Caco-2 (cell line): ENCODE measurements at regions of chr2 and their contacts with region 1.

Region 1: DNA sequence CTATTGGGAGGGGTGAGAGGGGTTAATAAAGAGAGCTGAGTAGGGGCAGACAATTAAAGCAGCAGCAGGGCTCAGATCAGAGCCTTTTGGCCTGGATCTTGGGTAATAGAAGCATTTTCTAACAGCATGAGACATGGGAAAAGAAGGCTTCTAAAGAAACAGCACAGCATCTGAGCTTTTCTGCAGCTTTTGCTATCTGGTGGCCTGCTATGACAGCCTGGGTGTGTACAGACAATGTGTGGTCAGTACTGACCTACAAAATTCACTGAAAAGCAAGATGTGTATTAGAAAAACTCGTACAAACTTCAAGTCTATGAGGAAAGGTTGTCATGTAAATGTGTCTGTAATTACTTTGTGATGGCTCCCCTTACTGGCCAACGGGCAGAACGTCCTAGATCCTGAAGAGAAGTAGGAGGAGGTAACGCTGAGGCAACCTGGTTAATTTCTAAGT is 95.6 kb downstream of the GALNT3 start:
- DNase-seq: peak; percentile 48 to 49
- H3K4me3 ChIP-seq: no peak overlapping the region
- H3K4me3 Mint-ChIP-seq: no peak overlapping the region
- H3K27ac Mint-ChIP-seq: no peak overlapping the region
- H3K4me1 ChIP-seq: no peaks in the 10 kb centered on the region
- H3K4me1 Mint-ChIP-seq: no peaks in the 10 kb centered on the region
- H3K27me3 ChIP-seq: no peaks in the 10 kb centered on the region
- H3K27me3 Mint-ChIP-seq: peaks cover 5% of the 10 kb centered on the region
- CTCF ChIP-seq: peak; percentile 37 to 73

Region 2: GRCh38 chr2:165529130-165529529 is 169.3 kb before region 1 on chr2:
- CTCF ChIA-PET with region 1: no interaction called
- POLR2A ChIA-PET with region 1: no interaction called
- intact Hi-C with region 1: no loop called
- DNase-seq: no peak
- H3K4me3 ChIP-seq: no peak overlapping the region
- H3K4me3 Mint-ChIP-seq: no peak overlapping the region
- H3K27ac Mint-ChIP-seq: no peak overlapping the region
- H3K4me1 ChIP-seq: no peaks in the 10 kb centered on the region
- H3K4me1 Mint-ChIP-seq: no peaks in the 10 kb centered on the region
- H3K27me3 ChIP-seq: no peaks in the 10 kb centered on the region
- H3K27me3 Mint-ChIP-seq: peaks cover 4% of the 10 kb centered on the region
- CTCF ChIP-seq: no peak

Region 3: GRCh38 chr2:165563468-165564225 is 134.8 kb before region 1 on chr2:
- CTCF ChIA-PET with region 1: no interaction called
- POLR2A ChIA-PET with region 1: no interaction called
- intact Hi-C with region 1: loop called (anchors 1 kb)
- DNase-seq: peak in 1 of 2 experiments; percentile 28
- H3K4me3 ChIP-seq: no peak overlapping the region
- H3K4me3 Mint-ChIP-seq: no peak overlapping the region
- H3K27ac Mint-ChIP-seq: no peak overlapping the region
- H3K4me1 ChIP-seq: no peaks in the 10 kb centered on the region
- H3K4me1 Mint-ChIP-seq: peaks cover 6% of the 10 kb centered on the region
- H3K27me3 ChIP-seq: no peaks in the 10 kb centered on the region
- H3K27me3 Mint-ChIP-seq: peaks cover 5% of the 10 kb centered on the region
- CTCF ChIP-seq: peak in 1 of 2 experiments; percentile 71

Region 4: GRCh38 chr2:165573534-165574461 is 124.7 kb before region 1 on chr2:
- CTCF ChIA-PET with region 1: no interaction called
- POLR2A ChIA-PET with region 1: no interaction called
- intact Hi-C with region 1: loop called (anchors 5 kb)
- DNase-seq: peak; percentile 82 to 83
- H3K4me3 ChIP-seq: peak overlapping the region; percentile 36
- H3K4me3 Mint-ChIP-seq: peak overlapping the region; percentile 79
- H3K27ac Mint-ChIP-seq: peak overlapping the region; percentile 27
- H3K4me1 ChIP-seq: peaks cover 4% of the 10 kb centered on the region; the same call in 1 of the 2 replicates
- H3K4me1 Mint-ChIP-seq: peaks cover 5% of the 10 kb centered on the region
- H3K27me3 ChIP-seq: no peaks in the 10 kb centered on the region
- H3K27me3 Mint-ChIP-seq: no peaks in the 10 kb centered on the region
- CTCF ChIP-seq: no peak

Region 5: DNA sequence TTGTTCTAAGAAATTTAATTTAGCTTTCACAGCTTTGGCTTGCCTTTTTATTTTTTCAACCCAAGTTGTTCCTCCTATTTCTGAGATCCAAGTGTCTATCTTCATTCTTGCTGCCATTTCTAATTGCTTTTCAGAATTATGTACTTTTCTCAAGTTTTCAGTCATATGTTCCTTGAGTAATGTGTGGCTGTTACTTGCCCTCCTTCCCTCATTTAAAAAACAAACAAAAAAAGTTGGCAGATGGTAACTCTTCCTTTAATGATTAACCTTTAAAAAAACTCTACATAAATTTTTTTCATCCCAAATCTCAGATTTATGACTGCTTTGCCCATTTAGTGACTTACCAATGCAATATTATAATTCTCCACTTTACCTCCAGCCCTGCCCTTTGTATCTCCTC is 35.7 kb before region 1 on chr2:
- CTCF ChIA-PET with region 1: no interaction called
- POLR2A ChIA-PET with region 1: no interaction called
- intact Hi-C with region 1: loop called (anchors 2 kb)
- DNase-seq: peak in 1 of 2 experiments; percentile 16
- H3K4me3 ChIP-seq: no peak overlapping the region
- H3K4me3 Mint-ChIP-seq: no peak overlapping the region
- H3K27ac Mint-ChIP-seq: peak overlapping the region; percentile 65
- H3K4me1 ChIP-seq: peaks cover 18% of the 10 kb centered on the region
- H3K4me1 Mint-ChIP-seq: peaks cover 11% of the 10 kb centered on the region
- H3K27me3 ChIP-seq: no peaks in the 10 kb centered on the region
- H3K27me3 Mint-ChIP-seq: peaks cover 6% of the 10 kb centered on the region
- CTCF ChIP-seq: no peak

Region 6: DNA sequence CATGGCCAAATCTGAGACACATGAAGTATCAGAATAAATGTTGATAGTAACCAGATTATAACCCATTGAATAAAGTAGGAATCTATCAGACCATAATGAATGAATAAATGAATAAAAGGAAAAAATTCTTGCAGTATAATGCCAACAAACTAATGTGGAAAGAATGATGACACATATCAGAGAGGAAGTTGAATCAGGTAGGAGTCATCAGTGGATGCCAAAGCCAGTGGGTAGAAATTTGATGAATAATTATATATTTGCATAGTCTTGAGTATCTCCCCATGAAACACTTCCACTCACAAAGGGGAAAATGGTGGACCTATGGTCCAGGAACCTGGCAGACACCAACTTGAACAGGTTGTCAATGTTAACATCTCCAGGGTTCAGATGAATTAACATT is 27.0 kb after region 1 on chr2:
- CTCF ChIA-PET with region 1: no interaction called
- POLR2A ChIA-PET with region 1: no interaction called
- intact Hi-C with region 1: no loop called
- DNase-seq: no peak
- H3K4me3 ChIP-seq: no peak overlapping the region
- H3K4me3 Mint-ChIP-seq: no peak overlapping the region
- H3K27ac Mint-ChIP-seq: no peak overlapping the region
- H3K4me1 ChIP-seq: no peaks in the 10 kb centered on the region
- H3K4me1 Mint-ChIP-seq: no peaks in the 10 kb centered on the region
- H3K27me3 ChIP-seq: no peaks in the 10 kb centered on the region
- H3K27me3 Mint-ChIP-seq: peaks cover 16% of the 10 kb centered on the region
- CTCF ChIP-seq: no peak

Region 7: GRCh38 chr2:165766324-165766927 is 68.0 kb after region 1 on chr2:
- CTCF ChIA-PET with region 1: no interaction called
- POLR2A ChIA-PET with region 1: no interaction called
- intact Hi-C with region 1: no loop called
- DNase-seq: no peak
- H3K4me3 ChIP-seq: no peak overlapping the region
- H3K4me3 Mint-ChIP-seq: no peak overlapping the region
- H3K27ac Mint-ChIP-seq: no peak overlapping the region
- H3K4me1 ChIP-seq: no peaks in the 10 kb centered on the region
- H3K4me1 Mint-ChIP-seq: no peaks in the 10 kb centered on the region
- H3K27me3 ChIP-seq: no peaks in the 10 kb centered on the region
- H3K27me3 Mint-ChIP-seq: no peaks in the 10 kb centered on the region
- CTCF ChIP-seq: no peak

Region 8: DNA sequence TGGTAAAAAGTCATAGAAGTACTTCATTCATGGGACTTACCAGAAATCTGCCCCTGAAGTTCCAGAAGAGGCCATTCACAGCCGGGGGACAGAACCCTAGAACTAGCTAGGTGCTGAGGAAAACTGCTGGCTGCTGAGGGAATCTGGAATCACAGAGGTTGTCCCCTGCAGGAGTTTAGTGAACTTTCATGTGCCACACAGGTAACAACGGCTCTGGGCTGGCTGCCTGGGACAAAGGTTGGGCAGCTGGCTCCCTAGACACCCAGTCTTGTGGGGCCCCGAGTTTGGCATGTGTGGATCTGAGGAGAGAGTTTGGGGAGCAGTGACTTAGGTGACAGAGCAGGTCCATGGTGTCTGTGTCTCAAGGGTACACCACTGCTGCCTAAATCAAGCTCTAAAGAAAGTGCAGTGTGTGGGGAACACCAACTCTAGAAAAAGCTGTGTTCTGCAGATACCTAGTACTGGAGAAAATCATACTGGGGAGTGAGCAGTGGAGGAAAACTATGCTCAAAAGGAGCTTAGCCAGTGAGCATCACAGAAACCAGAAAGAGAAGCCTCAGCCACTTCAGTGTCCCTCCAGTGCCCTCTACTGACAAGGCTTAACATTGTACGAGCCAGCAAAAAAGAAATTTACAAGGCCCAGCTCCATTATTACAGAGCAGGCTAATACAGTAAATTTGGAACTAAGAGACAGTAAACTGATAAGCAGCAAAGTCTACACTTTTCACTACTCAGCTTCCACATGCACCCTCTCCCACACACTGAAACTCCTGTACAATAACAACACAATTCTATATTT is 80.4 kb after region 1 on chr2:
- CTCF ChIA-PET with region 1: interaction called, 4 read pairs
- POLR2A ChIA-PET with region 1: no interaction called
- intact Hi-C with region 1: loop called (anchors 5 kb)
- DNase-seq: peak in 1 of 2 experiments; percentile 57
- H3K4me3 ChIP-seq: no peak overlapping the region
- H3K4me3 Mint-ChIP-seq: no peak overlapping the region
- H3K27ac Mint-ChIP-seq: no peak overlapping the region
- H3K4me1 ChIP-seq: peaks cover 6% of the 10 kb centered on the region; the same call in 1 of the 2 replicates
- H3K4me1 Mint-ChIP-seq: peaks cover 7% of the 10 kb centered on the region
- H3K27me3 ChIP-seq: no peaks in the 10 kb centered on the region
- H3K27me3 Mint-ChIP-seq: no peaks in the 10 kb centered on the region
- CTCF ChIP-seq: peak; percentile 59 to 65